Dorsolateral prefrontal cortex (tissue), 120 donors: ENCODE measurements at regions of chr9 and their contacts with region 1.

Region 1: DNA sequence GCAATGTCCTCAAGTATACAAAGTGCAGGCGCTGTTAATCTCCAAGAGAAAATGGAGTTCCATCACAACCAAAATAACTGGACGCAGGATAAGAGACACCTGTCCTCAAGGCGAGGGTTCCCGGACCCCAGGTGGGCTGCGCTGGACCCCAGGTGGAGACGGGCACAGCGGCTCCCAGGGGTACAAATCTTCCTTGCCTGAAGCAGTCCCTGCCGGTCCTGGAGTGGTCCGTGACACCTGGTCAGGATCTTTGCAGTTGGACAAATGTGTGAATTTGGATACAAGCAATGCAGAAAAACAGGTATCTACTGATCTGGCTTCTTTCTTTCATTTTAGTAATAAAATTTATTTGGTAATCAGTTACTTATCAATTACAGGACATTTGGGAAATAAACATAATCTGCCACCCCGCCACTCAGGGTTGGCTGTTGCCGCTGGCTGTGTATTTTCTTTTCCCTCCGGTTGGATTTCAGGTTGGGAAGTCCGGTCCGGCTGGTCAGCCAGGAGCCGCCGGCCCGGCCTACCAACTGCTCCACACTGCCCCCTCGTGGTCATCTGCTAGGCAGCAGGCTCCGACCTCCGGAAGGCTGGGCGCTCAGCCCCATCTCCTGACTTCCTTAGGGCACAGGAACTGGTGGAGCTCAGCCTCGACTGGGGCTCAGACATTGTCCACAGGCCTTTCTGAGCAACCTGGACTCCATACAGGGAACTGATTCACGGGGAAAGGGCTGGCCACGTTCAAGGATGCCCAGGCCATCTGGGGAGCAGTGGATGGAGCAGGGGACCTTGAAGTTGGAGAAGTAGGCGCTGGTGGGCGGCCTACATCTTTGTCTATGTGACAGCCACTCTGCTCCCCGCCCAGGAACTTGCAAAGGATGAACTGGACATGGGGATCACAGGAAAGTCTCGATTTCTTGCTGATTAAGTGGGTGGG is 43.4 kb downstream of the NXNL2 start:
- DNase-seq: peak; percentile 65 to 88 (median 76)
- H3K4me3 ChIP-seq: peak overlapping the region in 24 of 59 donors; percentile 2 to 46 (median 27)
- H3K27ac ChIP-seq: no peak overlapping the region
- H3K27me3 ChIP-seq: no peaks in the 10 kb centered on the region
- CTCF ChIP-seq: peak; percentile 86 to 99 (median 96)

Region 2: DNA sequence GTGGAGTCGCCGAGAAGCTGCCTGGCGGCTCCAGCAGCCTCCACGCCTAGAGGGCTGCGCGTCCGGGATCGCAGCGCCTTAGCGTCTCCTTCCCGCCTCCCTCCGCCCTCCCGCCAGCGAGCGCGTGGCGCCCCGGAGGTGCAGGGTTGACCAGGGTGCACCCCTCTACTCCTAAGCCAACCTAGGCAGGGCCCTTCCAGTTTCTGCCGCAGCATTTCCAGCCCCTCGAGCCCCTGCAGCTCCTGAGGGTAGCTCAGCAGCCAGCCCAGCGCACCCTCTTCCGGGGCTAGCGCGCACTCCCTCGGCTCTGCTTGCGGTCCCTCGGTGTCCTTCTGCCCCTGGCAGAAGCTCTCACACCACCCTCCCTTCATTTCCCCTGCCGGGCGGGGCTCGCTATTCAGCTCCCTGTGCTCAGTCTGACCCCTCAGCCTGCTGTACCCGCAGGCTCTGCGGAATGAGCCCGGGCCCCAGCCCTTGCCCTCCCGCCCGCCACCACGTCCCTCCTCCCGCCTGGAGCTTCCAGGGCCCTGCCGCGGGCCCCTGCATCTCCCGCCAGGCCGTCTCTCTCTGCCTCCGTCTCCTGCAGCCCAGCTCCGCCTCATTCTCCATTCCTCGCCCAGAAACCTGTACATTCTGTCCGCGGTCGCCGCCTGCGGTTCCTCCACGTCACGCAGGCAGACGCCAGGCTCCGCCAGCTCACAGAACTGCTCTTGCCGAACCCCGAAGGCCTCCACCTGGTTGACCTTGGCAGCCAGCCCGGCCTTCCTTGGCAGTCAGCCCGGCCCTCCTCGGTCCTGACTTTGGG is 501.9 kb before region 1 on chr9:
- intact Hi-C with region 1: loop called in 1 of 2 experiments (anchors 10 kb)
- DNase-seq: peak; percentile 39 to 78 (median 67)
- H3K4me3 ChIP-seq: peak overlapping the region; percentile 51 to 84 (median 68)
- H3K27ac ChIP-seq: peak overlapping the region in 58 of 59 donors; percentile 41 to 96 (median 86)
- H3K27me3 ChIP-seq: no peaks in the 10 kb centered on the region
- CTCF ChIP-seq: peak in 21 of 56 donors; percentile 3 to 30 (median 12)

Region 3: GRCh38 chr9:88106491-88106890 is 471.9 kb before region 1 on chr9:
- intact Hi-C with region 1: loop called in 1 of 2 experiments (anchors 10 kb)
- DNase-seq: peak in 2 of 10 donors; percentile 13 to 20
- H3K4me3 ChIP-seq: no peak overlapping the region
- H3K27ac ChIP-seq: no peak overlapping the region
- H3K27me3 ChIP-seq: peaks cover 0 to 7% (median 0%) of the 10 kb centered on the region in 45 donors
- CTCF ChIP-seq: peak in 55 of 56 donors; percentile 25 to 68 (median 48)

Region 4: GRCh38 chr9:88481933-88482332 is 96.5 kb before region 1 on chr9:
- intact Hi-C with region 1: loop called in 1 of 2 experiments (anchors 5 kb)
- DNase-seq: peak in 8 of 10 donors; percentile 33 to 75 (median 52)
- H3K4me3 ChIP-seq: peak overlapping the region in 2 of 59 donors; percentile 18 to 35
- H3K27ac ChIP-seq: peak overlapping the region in 49 of 59 donors; percentile 6 to 89 (median 66)
- H3K27me3 ChIP-seq: no peaks in the 10 kb centered on the region
- CTCF ChIP-seq: peak in 47 of 56 donors; percentile 6 to 69 (median 39)

Region 5: DNA sequence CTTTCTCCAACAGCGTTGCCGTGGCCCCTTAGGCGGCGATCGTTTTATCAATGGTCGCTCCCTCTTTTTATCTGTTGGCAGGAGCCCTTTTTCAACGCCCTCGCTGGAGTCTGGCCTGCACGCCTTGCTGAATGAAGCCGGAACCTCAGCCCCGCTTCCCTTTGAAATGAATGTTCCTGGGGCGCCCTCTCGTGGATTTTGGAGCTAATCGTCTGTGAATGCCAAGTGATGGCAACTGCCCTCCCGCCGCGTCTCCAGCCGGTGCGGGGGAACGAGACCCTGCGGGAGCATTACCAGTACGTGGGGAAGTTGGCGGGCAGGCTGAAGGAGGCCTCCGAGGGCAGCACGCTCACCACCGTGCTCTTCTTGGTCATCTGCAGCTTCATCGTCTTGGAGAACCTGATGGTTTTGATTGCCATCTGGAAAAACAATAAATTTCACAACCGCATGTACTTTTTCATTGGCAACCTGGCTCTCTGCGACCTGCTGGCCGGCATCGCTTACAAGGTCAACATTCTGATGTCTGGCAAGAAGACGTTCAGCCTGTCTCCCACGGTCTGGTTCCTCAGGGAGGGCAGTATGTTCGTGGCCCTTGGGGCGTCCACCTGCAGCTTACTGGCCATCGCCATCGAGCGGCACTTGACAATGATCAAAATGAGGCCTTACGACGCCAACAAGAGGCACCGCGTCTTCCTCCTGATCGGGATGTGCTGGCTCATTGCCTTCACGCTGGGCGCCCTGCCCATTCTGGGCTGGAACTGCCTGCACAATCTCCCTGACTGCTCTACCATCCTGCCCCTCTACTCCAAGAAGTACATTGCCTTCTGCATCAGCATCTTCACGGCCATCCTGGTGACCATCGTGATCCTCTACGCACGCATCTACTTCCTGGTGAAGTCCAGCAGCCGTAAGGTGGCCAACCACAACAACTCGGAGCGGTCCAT is 422.9 kb after region 1 on chr9:
- intact Hi-C with region 1: loop called in 1 of 2 experiments (anchors 5 kb)
- DNase-seq: peak; percentile 76 to 92 (median 88)
- H3K4me3 ChIP-seq: peak overlapping the region in 51 of 59 donors; percentile 3 to 62 (median 34)
- H3K27ac ChIP-seq: peak overlapping the region in 30 of 59 donors; percentile 4 to 78 (median 40)
- H3K27me3 ChIP-seq: no peaks in the 10 kb centered on the region
- CTCF ChIP-seq: peak; percentile 33 to 90 (median 82)